ENCODE measurements at regions of chr4 and their contacts with region 1.

Region 1: GRCh38 chr4:26197018-26197779 is 123.6 kb upstream of the RBPJ start:
- DNase-seq: peak; percentile 88
- H3K4me3 Mint-ChIP-seq: peak overlapping the region; percentile 55
- H3K27ac Mint-ChIP-seq: peak overlapping the region; percentile 86
- H3K4me1 Mint-ChIP-seq: peaks cover 71% of the 10 kb centered on the region
- H3K27me3 Mint-ChIP-seq: peaks cover 1% of the 10 kb centered on the region

Region 2: DNA sequence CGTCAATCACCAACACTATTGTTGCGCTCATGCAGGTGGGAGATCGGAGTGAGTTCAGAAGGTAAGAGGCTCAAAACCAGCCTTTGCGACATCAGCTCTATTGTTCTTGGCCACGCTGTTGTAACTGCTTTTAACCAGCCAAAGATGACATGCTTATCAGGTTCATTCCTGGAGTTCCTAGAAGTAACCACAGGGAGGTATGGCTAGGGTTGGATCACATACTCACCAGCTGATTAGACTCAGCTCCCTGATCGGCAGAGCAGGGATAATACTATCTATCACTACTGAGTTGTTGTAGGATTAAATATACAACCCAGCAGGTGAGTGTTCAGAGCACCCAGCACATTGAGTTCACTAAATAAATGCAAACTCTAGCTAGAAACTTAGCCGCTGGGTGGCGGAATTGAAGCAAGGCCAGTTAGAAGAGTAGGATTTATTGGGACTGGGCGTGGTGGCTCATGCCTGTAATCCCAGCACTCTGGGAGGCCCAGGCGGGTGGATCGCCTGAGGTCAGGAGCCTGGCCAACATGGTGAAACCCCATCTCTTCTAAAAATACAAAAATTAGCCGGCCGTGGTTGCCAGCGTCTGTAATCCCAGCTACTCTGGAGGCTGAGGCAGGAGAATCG is 529.2 kb before region 1 on chr4:
- CTCF ChIA-PET with region 1: no interaction called
- POLR2A ChIA-PET with region 1: no interaction called
- intact Hi-C with region 1: no loop called
- DNase-seq: no peak
- H3K4me3 Mint-ChIP-seq: no peak overlapping the region
- H3K27ac Mint-ChIP-seq: no peak overlapping the region
- H3K4me1 Mint-ChIP-seq: no peaks in the 10 kb centered on the region
- H3K27me3 Mint-ChIP-seq: no peaks in the 10 kb centered on the region

Region 3: GRCh38 chr4:25938787-25939186 is 258.4 kb before region 1 on chr4:
- CTCF ChIA-PET with region 1: no interaction called
- POLR2A ChIA-PET with region 1: no interaction called
- intact Hi-C with region 1: loop called (anchors 2 kb)
- DNase-seq: peak; percentile 77
- H3K4me3 Mint-ChIP-seq: no peak overlapping the region
- H3K27ac Mint-ChIP-seq: peak overlapping the region; percentile 82
- H3K4me1 Mint-ChIP-seq: peaks cover 24% of the 10 kb centered on the region
- H3K27me3 Mint-ChIP-seq: peaks cover 20% of the 10 kb centered on the region

Region 4: GRCh38 chr4:26081795-26082498 is 115.3 kb before region 1 on chr4:
- CTCF ChIA-PET with region 1: interaction called, 37 read pairs
- POLR2A ChIA-PET with region 1: interaction called, 65 read pairs
- intact Hi-C with region 1: loop called (anchors 1 kb)
- DNase-seq: no peak
- H3K4me3 Mint-ChIP-seq: peak overlapping the region; percentile 1
- H3K27ac Mint-ChIP-seq: peak overlapping the region; percentile 90
- H3K4me1 Mint-ChIP-seq: peaks cover 88% of the 10 kb centered on the region
- H3K27me3 Mint-ChIP-seq: no peaks in the 10 kb centered on the region

Region 5: GRCh38 chr4:26163425-26164362 is 33.5 kb before region 1 on chr4:
- CTCF ChIA-PET with region 1: no interaction called
- POLR2A ChIA-PET with region 1: no interaction called
- intact Hi-C with region 1: no loop called
- DNase-seq: no peak
- H3K4me3 Mint-ChIP-seq: no peak overlapping the region
- H3K27ac Mint-ChIP-seq: no peak overlapping the region
- H3K4me1 Mint-ChIP-seq: peaks cover 11% of the 10 kb centered on the region
- H3K27me3 Mint-ChIP-seq: no peaks in the 10 kb centered on the region

Region 6: DNA sequence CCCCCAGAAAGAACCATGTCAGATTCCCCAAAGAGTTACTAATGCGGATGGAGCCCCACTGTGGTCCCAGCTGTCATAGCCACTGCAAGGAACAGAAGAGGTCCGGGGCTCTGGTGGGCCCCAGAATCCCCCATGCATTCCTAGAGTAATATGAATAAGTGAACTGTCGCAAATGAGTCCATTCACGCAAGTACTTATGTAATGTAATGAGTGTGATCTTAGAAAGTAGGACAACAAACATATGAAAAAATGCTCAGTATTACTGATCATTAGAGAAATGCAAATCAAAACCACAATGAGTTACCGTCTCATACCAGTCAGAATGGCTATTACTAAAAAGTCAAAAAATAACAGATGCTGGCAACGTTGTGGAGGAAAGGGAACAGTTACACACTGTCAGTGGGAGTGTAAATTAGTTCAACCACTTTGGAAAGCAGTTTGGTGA is 17.9 kb before region 1 on chr4:
- CTCF ChIA-PET with region 1: interaction called, 6 read pairs
- POLR2A ChIA-PET with region 1: interaction called, 6 read pairs
- intact Hi-C with region 1: loop called (anchors 1 kb)
- DNase-seq: peak; percentile 72
- H3K4me3 Mint-ChIP-seq: no peak overlapping the region
- H3K27ac Mint-ChIP-seq: peak overlapping the region; percentile 82
- H3K4me1 Mint-ChIP-seq: peaks cover 29% of the 10 kb centered on the region
- H3K27me3 Mint-ChIP-seq: no peaks in the 10 kb centered on the region

Region 7: DNA sequence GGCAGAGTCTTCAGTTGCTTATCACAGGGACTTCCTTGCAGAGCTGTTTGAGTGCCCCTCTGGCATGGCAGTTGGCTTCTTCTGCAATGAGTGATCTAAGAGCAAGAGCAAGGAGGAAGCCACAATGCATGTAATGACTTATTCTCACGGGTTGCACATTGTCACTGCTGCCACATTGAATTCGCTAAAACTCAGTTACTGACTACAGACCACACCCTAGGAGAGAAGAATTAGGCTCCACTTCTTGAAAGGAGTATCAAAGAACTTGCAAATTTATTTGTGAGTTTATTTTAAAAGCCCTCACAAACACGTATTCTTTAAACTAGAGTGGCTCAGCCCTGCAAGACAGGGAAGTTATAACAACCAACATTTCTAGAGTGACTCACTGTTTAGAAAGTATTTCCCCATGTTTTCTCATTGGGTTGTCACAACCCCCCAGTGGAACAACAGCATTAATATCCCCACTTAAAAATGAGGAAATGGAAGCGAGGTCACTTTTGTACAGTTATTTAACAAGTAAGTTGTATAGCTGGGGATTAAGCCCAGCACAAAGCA is 91.2 kb after region 1 on chr4:
- CTCF ChIA-PET with region 1: no interaction called
- POLR2A ChIA-PET with region 1: no interaction called
- intact Hi-C with region 1: loop called (anchors 1 kb)
- DNase-seq: peak; percentile 74
- H3K4me3 Mint-ChIP-seq: no peak overlapping the region
- H3K27ac Mint-ChIP-seq: peak overlapping the region; percentile 66
- H3K4me1 Mint-ChIP-seq: peaks cover 25% of the 10 kb centered on the region
- H3K27me3 Mint-ChIP-seq: no peaks in the 10 kb centered on the region

Region 8: DNA sequence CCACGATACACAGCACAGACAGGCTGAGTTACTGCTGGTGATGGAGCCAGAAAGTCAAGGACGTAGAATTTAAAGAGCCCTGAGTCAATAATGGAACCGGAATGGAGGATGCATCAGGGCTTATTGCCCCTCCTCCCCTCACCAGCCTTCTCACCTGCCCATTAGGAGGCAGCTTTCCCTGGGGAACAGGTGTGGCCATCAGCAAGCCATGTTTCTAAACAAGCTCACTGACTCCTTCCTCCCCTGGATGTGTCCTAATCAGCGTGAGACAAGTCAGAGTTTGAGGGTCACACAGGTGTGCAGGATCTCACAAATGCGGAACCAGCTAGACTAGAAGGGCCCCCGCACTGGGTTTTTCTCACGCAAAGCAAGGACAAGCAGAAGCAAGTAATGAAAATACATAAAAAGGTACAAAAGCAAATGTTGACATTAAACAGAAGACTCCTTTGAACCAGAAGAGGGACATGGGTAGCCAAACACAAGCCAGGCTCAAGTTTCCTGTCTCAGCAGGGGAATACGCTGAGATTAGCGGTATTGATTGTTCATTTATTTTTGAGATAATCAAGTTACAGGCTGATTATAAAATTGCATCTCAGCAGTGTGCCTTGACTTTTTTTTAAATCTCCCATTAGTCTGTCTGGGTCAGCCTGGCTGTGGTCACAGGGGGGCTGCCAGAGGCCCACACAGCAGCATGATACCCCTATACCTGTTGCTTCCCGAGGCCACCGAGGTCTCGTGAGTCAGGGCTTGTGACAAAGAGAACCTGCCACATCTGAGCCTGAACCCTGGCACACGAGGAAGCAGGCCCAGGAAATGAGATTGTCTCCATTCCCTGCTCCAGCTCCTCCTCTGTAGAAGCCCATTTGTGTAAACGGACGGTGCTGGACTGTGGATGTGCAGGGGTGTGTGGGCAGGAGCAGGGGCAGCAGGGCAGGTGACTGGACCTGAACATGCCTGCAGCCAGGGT is 255.6 kb after region 1 on chr4:
- CTCF ChIA-PET with region 1: no interaction called
- POLR2A ChIA-PET with region 1: no interaction called
- intact Hi-C with region 1: no loop called
- DNase-seq: no peak
- H3K4me3 Mint-ChIP-seq: no peak overlapping the region
- H3K27ac Mint-ChIP-seq: no peak overlapping the region
- H3K4me1 Mint-ChIP-seq: no peaks in the 10 kb centered on the region
- H3K27me3 Mint-ChIP-seq: no peaks in the 10 kb centered on the region

Region 9: GRCh38 chr4:26885912-26886274 is 688.7 kb after region 1 on chr4:
- CTCF ChIA-PET with region 1: no interaction called
- POLR2A ChIA-PET with region 1: no interaction called
- intact Hi-C with region 1: loop called (anchors 10 kb)
- DNase-seq: no peak
- H3K4me3 Mint-ChIP-seq: peak overlapping the region; percentile 63
- H3K27ac Mint-ChIP-seq: peak overlapping the region; percentile 83
- H3K4me1 Mint-ChIP-seq: peaks cover 67% of the 10 kb centered on the region
- H3K27me3 Mint-ChIP-seq: no peaks in the 10 kb centered on the region

Measured in activated CD4-positive, alpha-beta memory T cell treated with anti-CD3 and anti-CD28 coated beads for 36 hours (primary cell).